Endothelial cell of umbilical vein (primary cell): ENCODE measurements at regions of chr2 and their contacts with region 1.

Region 1: DNA sequence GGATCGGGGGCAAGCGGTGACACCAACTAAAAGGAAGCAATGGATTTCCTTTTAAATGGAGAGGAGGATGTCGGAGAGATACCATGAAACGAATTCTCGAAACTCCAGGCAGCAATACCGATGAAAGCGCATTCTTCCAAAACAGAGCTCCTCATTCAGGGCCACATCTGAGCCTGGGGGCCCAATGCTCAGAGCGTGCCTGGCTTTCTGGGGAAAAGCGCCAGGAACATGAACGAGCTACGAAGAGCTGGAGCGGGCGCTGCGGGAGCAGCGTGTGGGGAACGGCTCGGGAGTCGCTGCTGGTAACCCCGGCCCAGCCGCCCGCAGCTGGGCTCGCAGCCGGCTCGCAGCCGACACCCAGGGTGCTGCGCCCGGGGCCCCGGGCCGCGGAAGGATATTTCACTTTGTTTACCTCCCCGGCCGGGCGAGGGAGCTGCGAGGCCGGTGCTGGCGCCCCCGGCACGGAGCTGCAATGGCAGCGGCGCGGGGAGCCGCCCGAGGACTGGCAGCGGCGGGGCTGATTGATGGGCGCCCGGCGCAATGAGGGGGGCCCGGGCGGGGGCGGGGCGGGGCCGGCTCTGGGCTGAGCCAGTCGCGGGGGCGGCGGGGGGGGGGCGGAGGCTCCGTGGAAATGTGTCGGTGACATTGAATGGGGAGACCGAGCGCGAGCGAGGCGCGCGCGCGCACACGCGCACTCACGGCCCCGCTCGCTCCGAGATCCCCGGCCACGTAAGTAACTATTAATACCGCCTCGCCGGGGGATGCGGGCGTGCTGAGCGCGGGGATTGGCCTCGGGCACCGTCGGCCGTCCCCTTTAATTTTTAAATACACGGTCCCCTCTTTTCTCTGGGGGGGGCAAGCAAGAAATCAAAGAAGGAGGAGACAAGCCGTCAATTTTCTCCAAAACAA is at the start of gene TRIB2:
- DNase-seq: peak; percentile 85
- H3K4me3 ChIP-seq: peak within 1 kb of the TSS; percentile 80 to 95 (median 82)
- H3K27ac ChIP-seq: peak within 1 kb of the TSS; percentile 89
- H3K4me1 ChIP-seq: peaks cover 30% of the 10 kb centered on the region
- H3K27me3 ChIP-seq: no peaks in the 10 kb centered on the region
- CTCF ChIP-seq: peak in 1 of 2 donors; percentile 1
- POLR2A ChIP-seq: peak; percentile 67
- total RNA-seq, gene TRIB2: 17.6 and 20.5 TPM in 2 replicates

Region 2: GRCh38 chr2:12155303-12156051 is 561.1 kb before region 1 on chr2:
- CTCF ChIA-PET with region 1: no interaction called
- POLR2A ChIA-PET with region 1: no interaction called
- dilution Hi-C with region 1: no loop called
- intact Hi-C with region 1: loop called (anchors 1 kb)
- DNase-seq: peak; percentile 97
- H3K4me3 ChIP-seq: no peak overlapping the region
- H3K27ac ChIP-seq: peak overlapping the region; percentile 85
- H3K4me1 ChIP-seq: peaks cover 21% of the 10 kb centered on the region
- H3K27me3 ChIP-seq: peaks cover 0 to 2% of the 10 kb centered on the region in 2 experiments
- CTCF ChIP-seq: no peak
- POLR2A ChIP-seq: peak; percentile 36

Region 3: GRCh38 chr2:12430407-12431133 is 286.0 kb before region 1 on chr2:
- CTCF ChIA-PET with region 1: interaction called, 24 read pairs
- POLR2A ChIA-PET with region 1: no interaction called
- dilution Hi-C with region 1: no loop called
- intact Hi-C with region 1: loop called (anchors 5 kb)
- DNase-seq: no peak
- H3K4me3 ChIP-seq: no peak overlapping the region
- H3K27ac ChIP-seq: no peak overlapping the region
- H3K4me1 ChIP-seq: no peaks in the 10 kb centered on the region
- H3K27me3 ChIP-seq: no peaks in the 10 kb centered on the region
- CTCF ChIP-seq: no peak
- POLR2A ChIP-seq: no peak

Region 4: GRCh38 chr2:12665334-12665733 is 51.2 kb before region 1 on chr2:
- CTCF ChIA-PET with region 1: interaction called, 14 read pairs
- POLR2A ChIA-PET with region 1: no interaction called
- dilution Hi-C with region 1: no loop called
- intact Hi-C with region 1: loop called (anchors 2 kb)
- DNase-seq: peak; percentile 94
- H3K4me3 ChIP-seq: no peak overlapping the region
- H3K27ac ChIP-seq: peak overlapping the region; percentile 86
- H3K4me1 ChIP-seq: peaks cover 24% of the 10 kb centered on the region
- H3K27me3 ChIP-seq: no peaks in the 10 kb centered on the region
- CTCF ChIP-seq: no peak
- POLR2A ChIP-seq: no peak

Region 5: GRCh38 chr2:12797815-12798214 is 81.3 kb after region 1 on chr2:
- CTCF ChIA-PET with region 1: interaction called, 11 read pairs
- POLR2A ChIA-PET with region 1: no interaction called
- dilution Hi-C with region 1: no loop called
- intact Hi-C with region 1: no loop called
- DNase-seq: peak; percentile 92
- H3K4me3 ChIP-seq: no peak overlapping the region
- H3K27ac ChIP-seq: peak overlapping the region; percentile 85
- H3K4me1 ChIP-seq: peaks cover 24% of the 10 kb centered on the region
- H3K27me3 ChIP-seq: no peaks in the 10 kb centered on the region
- CTCF ChIP-seq: no peak
- POLR2A ChIP-seq: no peak

Region 6: GRCh38 chr2:12965540-12966269 is 249.2 kb after region 1 on chr2:
- CTCF ChIA-PET with region 1: no interaction called
- POLR2A ChIA-PET with region 1: no interaction called
- dilution Hi-C with region 1: no loop called
- intact Hi-C with region 1: loop called (anchors 1 kb)
- DNase-seq: peak; percentile 84
- H3K4me3 ChIP-seq: peak overlapping the region in 1 of 3 experiments; percentile 30
- H3K27ac ChIP-seq: peak overlapping the region; percentile 67
- H3K4me1 ChIP-seq: peaks cover 17% of the 10 kb centered on the region
- H3K27me3 ChIP-seq: no peaks in the 10 kb centered on the region
- CTCF ChIP-seq: no peak
- POLR2A ChIP-seq: peak; percentile 43

Region 7: DNA sequence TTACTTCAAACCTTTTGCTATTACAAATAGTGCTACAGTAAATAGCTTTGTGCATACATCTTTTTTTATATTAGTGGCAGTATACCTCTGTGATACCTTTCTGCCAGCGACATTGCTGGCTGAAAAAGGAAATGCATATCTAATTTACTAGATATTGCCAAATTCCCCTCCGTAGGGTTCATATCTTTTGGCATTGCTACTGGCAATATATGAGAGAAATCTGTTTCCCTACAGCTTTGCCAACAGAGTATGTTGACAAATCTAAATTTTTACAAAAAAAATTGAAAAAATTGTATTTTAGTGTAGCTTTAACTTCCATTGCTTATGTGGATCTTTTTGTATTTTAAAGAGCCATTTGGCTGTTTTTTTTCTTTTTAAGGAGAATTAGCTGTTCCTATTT is 426.9 kb after region 1 on chr2:
- CTCF ChIA-PET with region 1: no interaction called
- POLR2A ChIA-PET with region 1: no interaction called
- dilution Hi-C with region 1: no loop called
- intact Hi-C with region 1: no loop called
- DNase-seq: no peak
- H3K4me3 ChIP-seq: no peak overlapping the region
- H3K27ac ChIP-seq: no peak overlapping the region
- H3K4me1 ChIP-seq: no peaks in the 10 kb centered on the region
- H3K27me3 ChIP-seq: no peaks in the 10 kb centered on the region
- CTCF ChIP-seq: no peak
- POLR2A ChIP-seq: no peak